Calu3 (cell line): ENCODE measurements at regions of chr1 and their contacts with region 1.

Region 1: GRCh38 chr1:183471743-183472487 is 384 bp upstream of the SMG7 start:
- DNase-seq: peak; percentile 96
- H3K4me3 Mint-ChIP-seq: peak overlapping the region; percentile 96
- H3K27ac Mint-ChIP-seq: peak overlapping the region; percentile 99
- H3K4me1 Mint-ChIP-seq: peaks cover 33% of the 10 kb centered on the region
- H3K27me3 Mint-ChIP-seq: no peaks in the 10 kb centered on the region
- CTCF ChIP-seq: no peak

Region 2: GRCh38 chr1:183370399-183371058 is 101.4 kb before region 1 on chr1:
- CTCF ChIA-PET with region 1: no interaction called
- intact Hi-C with region 1: loop called (anchors 2 kb)
- DNase-seq: peak; percentile 85
- H3K4me3 Mint-ChIP-seq: peak overlapping the region; percentile 45
- H3K27ac Mint-ChIP-seq: peak overlapping the region; percentile 72
- H3K4me1 Mint-ChIP-seq: peaks cover 56% of the 10 kb centered on the region
- H3K27me3 Mint-ChIP-seq: no peaks in the 10 kb centered on the region
- CTCF ChIP-seq: no peak

Region 3: DNA sequence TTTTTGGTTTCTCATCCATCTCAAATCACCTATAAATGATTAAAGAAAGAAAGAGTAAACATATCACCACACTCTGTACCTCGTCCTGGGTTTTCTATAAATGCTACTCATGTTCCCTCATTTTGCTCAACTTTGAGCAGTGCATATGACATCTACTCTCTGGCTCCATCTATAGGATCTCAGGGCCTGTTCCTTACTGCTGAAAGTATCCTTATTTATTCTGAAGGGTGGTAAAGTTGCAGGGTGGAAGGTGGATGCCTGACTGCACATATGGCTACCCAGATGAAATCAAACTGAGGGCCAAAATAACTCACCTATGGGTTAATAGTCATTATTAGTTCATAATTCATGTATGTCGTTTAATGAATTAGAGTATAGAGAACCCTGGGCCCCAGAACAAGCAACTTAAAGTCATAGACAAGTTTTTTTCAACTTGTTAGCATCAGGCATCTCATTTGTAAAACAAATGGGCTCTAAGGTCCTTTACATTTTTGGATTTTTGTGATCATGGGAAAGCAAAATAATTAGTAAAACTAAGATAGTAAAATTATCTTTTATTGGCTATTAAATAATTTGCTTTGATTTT is 71.8 kb after region 1 on chr1:
- CTCF ChIA-PET with region 1: interaction called, 3 read pairs
- intact Hi-C with region 1: loop called (anchors 2 kb)
- DNase-seq: peak; percentile 52
- H3K4me3 Mint-ChIP-seq: no peak overlapping the region
- H3K27ac Mint-ChIP-seq: peak overlapping the region; percentile 40
- H3K4me1 Mint-ChIP-seq: peaks cover 24% of the 10 kb centered on the region
- H3K27me3 Mint-ChIP-seq: no peaks in the 10 kb centered on the region
- CTCF ChIP-seq: peak; percentile 64

Region 4: GRCh38 chr1:183622884-183623785 is 151.2 kb after region 1 on chr1:
- CTCF ChIA-PET with region 1: no interaction called
- intact Hi-C with region 1: loop called (anchors 2 kb)
- DNase-seq: peak; percentile 74
- H3K4me3 Mint-ChIP-seq: no peak overlapping the region
- H3K27ac Mint-ChIP-seq: no peak overlapping the region
- H3K4me1 Mint-ChIP-seq: peaks cover 21% of the 10 kb centered on the region
- H3K27me3 Mint-ChIP-seq: no peaks in the 10 kb centered on the region
- CTCF ChIP-seq: peak; percentile 62

Region 5: DNA sequence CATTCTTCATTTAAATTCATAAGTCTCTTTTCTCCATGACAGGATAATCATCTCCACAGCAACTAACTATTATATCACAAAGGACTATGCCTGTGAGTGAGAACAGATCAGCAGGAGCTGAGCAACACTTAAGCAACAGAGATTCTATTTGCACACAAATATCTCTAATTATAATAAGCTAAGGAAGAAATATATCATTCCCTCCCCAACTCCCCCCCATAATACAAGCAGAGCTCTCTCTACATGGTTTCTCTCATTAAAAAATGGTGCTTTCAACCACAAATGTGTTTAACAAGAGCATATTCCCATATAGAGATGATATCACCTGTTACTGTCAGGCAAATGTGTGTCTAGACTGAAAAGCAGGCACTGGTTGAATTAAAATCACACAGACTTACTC is 1536.9 kb after region 1 on chr1:
- CTCF ChIA-PET with region 1: no interaction called
- intact Hi-C with region 1: no loop called
- DNase-seq: no peak
- H3K4me3 Mint-ChIP-seq: no peak overlapping the region
- H3K27ac Mint-ChIP-seq: no peak overlapping the region
- H3K4me1 Mint-ChIP-seq: no peaks in the 10 kb centered on the region
- H3K27me3 Mint-ChIP-seq: no peaks in the 10 kb centered on the region
- CTCF ChIP-seq: no peak